ENCODE measurements at regions of chr6 and their contacts with region 1.

Region 1: DNA sequence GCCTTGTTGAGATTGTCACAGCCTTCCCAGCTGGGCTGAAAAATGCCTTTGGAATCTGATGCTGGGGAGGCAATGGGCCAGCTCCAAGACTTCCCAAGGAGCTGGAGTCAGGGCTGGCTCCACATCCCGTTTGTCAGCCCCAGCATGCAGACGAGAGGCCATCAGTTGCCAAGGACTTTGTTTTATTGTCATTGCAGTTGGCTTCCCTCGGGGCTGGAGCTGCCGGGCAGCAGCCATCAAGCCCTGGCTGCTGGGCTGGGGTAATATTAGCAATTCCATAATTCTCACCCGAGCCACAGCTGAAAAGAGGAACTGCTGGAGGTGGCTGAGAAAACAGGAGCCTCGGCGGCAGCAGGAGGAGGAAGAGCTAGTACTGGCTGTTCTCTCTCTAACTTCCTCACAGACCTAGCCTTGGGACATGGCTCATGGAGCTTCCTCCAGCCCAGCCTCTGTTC is 182.5 kb downstream of the CDC5L start:
- DNase-seq: no peak
- ATAC-seq: peak; percentile 64
- H3K4me3 Mint-ChIP-seq: no peak overlapping the region
- H3K27ac Mint-ChIP-seq: no peak overlapping the region
- H3K4me1 Mint-ChIP-seq: peaks cover 13% of the 10 kb centered on the region
- H3K27me3 Mint-ChIP-seq: no peaks in the 10 kb centered on the region; the same call in 1 of the 2 replicates
- CTCF ChIP-seq: no peak

Region 2: DNA sequence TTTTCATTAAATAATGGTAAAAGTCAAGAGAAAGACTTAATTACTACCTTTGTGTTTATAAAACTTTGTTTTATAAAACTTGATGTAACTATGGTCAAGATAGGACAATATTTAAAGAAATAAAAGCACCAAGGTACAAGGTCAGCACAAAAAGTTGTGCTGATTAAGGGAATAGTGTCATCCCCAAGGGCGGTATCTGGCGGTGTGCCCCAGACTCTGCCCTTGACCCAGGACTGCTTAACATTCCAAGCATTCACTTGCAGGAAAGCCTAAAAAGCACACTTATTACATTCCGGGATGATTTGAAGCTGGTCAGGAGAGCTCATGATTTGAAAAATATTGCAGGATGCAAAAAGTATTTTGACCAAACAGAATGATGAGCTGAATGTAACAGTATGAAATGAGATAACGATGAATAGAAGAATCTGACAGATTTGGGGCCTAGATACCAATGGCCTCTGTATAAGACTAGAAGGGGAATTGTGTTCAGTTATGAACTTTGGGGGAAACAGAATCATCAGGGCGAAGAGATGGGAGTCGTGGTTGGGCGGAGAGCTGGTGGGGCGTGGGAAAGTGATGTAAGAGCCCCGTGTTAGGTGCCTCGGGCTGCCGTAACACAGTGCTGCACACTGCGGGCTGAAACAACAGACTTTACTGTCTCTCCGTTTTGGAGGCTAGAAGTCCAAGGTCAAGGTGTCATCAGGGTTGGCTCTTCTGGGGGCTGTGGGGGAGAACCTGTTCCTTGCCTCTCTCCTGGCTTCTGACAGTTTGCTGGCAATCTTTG is 105.2 kb before region 1 on chr6:
- CTCF ChIA-PET with region 1: interaction called, 13 read pairs
- POLR2A ChIA-PET with region 1: no interaction called
- DNase-seq: no peak
- ATAC-seq: peak; percentile 73
- H3K4me3 Mint-ChIP-seq: no peak overlapping the region
- H3K27ac Mint-ChIP-seq: no peak overlapping the region
- H3K4me1 Mint-ChIP-seq: peaks cover 5% of the 10 kb centered on the region
- H3K27me3 Mint-ChIP-seq: no peaks in the 10 kb centered on the region; the same call in 1 of the 2 replicates
- CTCF ChIP-seq: no peak

Region 3: GRCh38 chr6:44512868-44513741 is 56.9 kb before region 1 on chr6:
- CTCF ChIA-PET with region 1: no interaction called
- POLR2A ChIA-PET with region 1: no interaction called
- DNase-seq: no peak
- ATAC-seq: peak; percentile 55; the same call in 1 of the 2 replicates
- H3K4me3 Mint-ChIP-seq: no peak overlapping the region
- H3K27ac Mint-ChIP-seq: no peak overlapping the region
- H3K4me1 Mint-ChIP-seq: 0 out of 2 replicates have a peak, but pooled peaks cover 2% of the 10 kb centered on the region
- H3K27me3 Mint-ChIP-seq: no peaks in the 10 kb centered on the region; the same call in 1 of the 2 replicates
- CTCF ChIP-seq: no peak

Region 4: GRCh38 chr6:44704240-44705150 is 134.5 kb after region 1 on chr6:
- CTCF ChIA-PET with region 1: no interaction called
- POLR2A ChIA-PET with region 1: no interaction called
- DNase-seq: no peak
- ATAC-seq: no peak
- H3K4me3 Mint-ChIP-seq: no peak overlapping the region
- H3K27ac Mint-ChIP-seq: no peak overlapping the region
- H3K4me1 Mint-ChIP-seq: peaks cover 14% of the 10 kb centered on the region
- H3K27me3 Mint-ChIP-seq: no peaks in the 10 kb centered on the region
- CTCF ChIP-seq: no peak